ENCODE measurements at regions of chr5 and their contacts with region 1.

Region 1: DNA sequence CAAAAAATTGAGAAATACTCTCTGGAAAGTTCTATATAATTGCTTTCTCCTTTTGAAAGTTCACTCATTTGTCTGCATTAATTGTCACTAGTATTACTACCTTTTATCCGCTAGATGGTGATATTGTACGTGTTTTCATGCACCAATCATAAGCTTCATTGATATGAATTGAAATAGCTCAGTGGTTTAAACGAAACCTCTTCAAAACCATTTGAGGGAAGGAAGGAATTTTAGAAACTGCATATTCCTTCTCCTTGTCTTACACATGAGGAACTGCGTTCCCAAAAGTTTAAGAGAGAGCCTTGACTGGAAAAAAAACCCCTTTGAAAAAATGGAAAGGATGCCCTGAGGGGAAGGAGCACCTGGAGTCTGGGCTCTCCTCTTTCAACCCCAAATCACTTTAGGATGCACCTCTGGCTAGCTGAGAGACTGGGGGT is 98.6 kb downstream of the YTHDC2 start:
- DNase-seq: no peak
- ATAC-seq: peak in 4 of 8 donors; percentile 41 to 55 (median 48)
- H3K4me3 ChIP-seq: no peak overlapping the region
- H3K27ac ChIP-seq: no peak overlapping the region
- H3K4me1 ChIP-seq: peaks cover 0 to 8% (median 0%) of the 10 kb centered on the region in 9 donors
- H3K27me3 ChIP-seq: peaks cover 0 to 10% (median 0%) of the 10 kb centered on the region in 7 donors
- CTCF ChIP-seq: peak in 8 of 9 donors; percentile 30 to 76 (median 67)

Region 2: DNA sequence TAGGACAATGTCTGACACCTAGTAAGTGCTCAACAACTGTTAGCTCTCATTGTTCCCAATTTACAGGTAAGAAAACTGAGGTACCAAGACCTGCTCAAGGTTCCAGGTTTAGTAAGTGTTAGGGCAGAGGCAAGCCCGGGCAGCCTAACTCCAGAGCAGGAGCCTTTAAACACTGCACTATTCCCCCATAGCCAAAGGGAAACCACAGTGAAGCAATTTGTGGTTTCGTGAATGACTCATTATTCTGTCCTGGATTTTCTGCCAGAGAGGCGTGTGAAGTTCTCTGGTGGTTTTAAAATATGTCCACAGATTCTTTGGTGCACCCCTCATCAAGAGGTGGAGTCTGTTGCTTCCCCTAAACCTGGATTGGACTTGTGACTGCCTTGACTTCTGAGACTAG is 122.8 kb before region 1 on chr5:
- intact Hi-C with region 1: no loop called
- DNase-seq: no peak
- ATAC-seq: peak in 7 of 8 donors; percentile 49 to 76 (median 67)
- H3K4me3 ChIP-seq: peak overlapping the region in 1 of 10 donors; percentile 60
- H3K27ac ChIP-seq: peak overlapping the region in 2 of 10 donors; percentile 31 to 32
- H3K4me1 ChIP-seq: peaks cover 0 to 27% (median 13%) of the 10 kb centered on the region in 9 donors
- H3K27me3 ChIP-seq: peaks cover 0 to 98% (median 25%) of the 10 kb centered on the region in 7 donors
- CTCF ChIP-seq: no peak

Region 3: GRCh38 chr5:113520429-113520828 is 91.6 kb before region 1 on chr5:
- intact Hi-C with region 1: no loop called
- DNase-seq: no peak
- ATAC-seq: peak in 1 of 8 donors; percentile 30
- H3K4me3 ChIP-seq: no peak overlapping the region
- H3K27ac ChIP-seq: no peak overlapping the region
- H3K4me1 ChIP-seq: peaks cover 0 to 46% (median 20%) of the 10 kb centered on the region in 9 donors
- H3K27me3 ChIP-seq: no peaks in the 10 kb centered on the region
- CTCF ChIP-seq: no peak

Region 4: DNA sequence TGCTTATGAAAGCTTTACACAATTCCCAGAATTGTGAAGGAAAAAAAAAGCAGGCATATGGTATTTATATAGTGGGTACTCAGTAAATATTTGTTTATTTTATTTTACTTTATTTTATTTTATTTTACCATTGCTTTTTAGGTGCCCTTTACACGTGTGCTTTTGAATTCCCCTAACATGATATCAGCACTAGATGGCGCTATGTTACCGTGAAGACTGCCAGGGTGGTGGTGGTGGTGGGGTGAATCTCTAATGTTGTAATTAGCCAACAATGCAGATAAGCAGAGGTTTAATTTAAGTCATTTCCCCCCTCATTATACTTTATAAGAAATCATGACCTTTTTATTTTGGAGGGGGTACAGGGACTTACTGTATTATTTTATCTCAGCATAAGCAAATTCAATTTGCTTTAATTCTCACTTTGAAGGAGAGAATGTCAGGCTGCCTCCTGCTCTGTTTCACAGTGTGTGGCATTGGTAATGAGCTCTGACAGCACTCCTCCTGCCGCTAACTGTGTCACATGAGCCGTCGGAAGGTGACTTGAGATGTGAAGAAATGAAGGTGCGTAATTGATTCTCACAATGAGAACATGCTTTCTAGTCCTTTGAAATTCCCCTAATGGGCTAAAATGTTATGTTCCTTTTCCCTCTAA is 67.0 kb after region 1 on chr5:
- intact Hi-C with region 1: loop called in 1 of 10 experiments (anchors 5 kb)
- DNase-seq: no peak
- ATAC-seq: peak in 7 of 8 donors; percentile 53 to 84 (median 69)
- H3K4me3 ChIP-seq: no peak overlapping the region
- H3K27ac ChIP-seq: no peak overlapping the region
- H3K4me1 ChIP-seq: no peaks in the 10 kb centered on the region
- H3K27me3 ChIP-seq: no peaks in the 10 kb centered on the region
- CTCF ChIP-seq: peak; percentile 55 to 80 (median 71)

Region 5: DNA sequence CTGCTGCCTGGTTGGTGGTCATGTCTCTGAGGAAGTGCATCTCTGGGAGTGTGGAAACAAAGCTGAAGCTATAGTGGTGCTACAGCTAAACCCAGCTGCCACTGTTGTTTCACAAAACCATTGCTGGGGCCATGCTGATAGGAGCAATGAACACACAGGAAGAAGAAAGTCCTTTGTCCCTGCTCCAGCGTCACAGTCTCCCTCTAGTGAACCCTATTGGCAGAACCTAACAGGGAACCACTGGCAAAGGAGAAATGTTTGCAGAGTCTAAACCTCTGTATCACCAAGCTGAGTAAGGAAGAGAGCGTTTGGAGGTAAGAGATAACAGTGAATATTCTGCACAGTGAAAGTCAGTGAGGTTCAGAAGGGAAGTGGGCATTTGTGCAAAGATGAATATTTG is 145.4 kb after region 1 on chr5:
- intact Hi-C with region 1: no loop called
- DNase-seq: no peak
- ATAC-seq: no peak
- H3K4me3 ChIP-seq: no peak overlapping the region
- H3K27ac ChIP-seq: no peak overlapping the region
- H3K4me1 ChIP-seq: no peaks in the 10 kb centered on the region
- H3K27me3 ChIP-seq: peaks cover 0 to 10% (median 0%) of the 10 kb centered on the region in 7 donors
- CTCF ChIP-seq: no peak

Region 6: DNA sequence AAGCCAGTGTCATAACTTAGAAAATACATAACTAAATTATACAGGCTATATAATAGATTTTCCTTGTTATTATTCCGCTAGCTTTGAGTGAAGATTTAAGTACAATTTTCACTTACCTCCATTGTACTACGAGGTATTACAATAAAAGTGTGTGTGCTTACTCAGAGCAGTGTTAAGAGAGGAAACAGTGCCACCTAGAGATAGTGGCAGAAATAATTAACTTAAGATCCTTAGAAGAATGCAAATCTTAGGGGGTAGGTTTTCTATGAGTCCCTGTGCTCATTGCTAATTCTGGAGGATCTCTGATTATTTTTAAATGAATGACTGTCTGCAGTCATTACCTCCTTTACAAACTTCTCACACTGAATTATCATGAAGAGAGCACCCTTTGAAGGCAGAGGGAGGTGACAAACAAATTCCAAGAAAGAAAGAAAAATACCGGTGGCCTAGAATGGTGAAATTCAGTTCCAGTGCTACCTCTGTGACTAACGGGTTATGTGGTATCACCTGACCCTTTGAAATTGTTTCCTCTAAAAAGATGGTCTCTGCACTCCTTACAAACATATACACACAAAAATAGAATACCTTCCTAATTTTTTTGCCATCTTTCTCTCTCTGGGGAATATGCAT is 1177.8 kb after region 1 on chr5:
- intact Hi-C with region 1: loop called in 1 of 10 experiments (anchors 10 kb)
- DNase-seq: no peak
- ATAC-seq: no peak
- H3K4me3 ChIP-seq: no peak overlapping the region
- H3K27ac ChIP-seq: no peak overlapping the region
- H3K4me1 ChIP-seq: no peaks in the 10 kb centered on the region
- H3K27me3 ChIP-seq: peaks cover 0 to 19% (median 5%) of the 10 kb centered on the region in 7 donors
- CTCF ChIP-seq: peak in 7 of 9 donors; percentile 27 to 58 (median 47)

Region 7: GRCh38 chr5:115069087-115069968 is 1457.2 kb after region 1 on chr5:
- intact Hi-C with region 1: loop called in 4 of 10 experiments (anchors 5 kb)
- DNase-seq: peak in 1 of 2 donors; percentile 26
- ATAC-seq: peak in 2 of 8 donors; percentile 33 to 44
- H3K4me3 ChIP-seq: no peak overlapping the region
- H3K27ac ChIP-seq: no peak overlapping the region
- H3K4me1 ChIP-seq: no peaks in the 10 kb centered on the region
- H3K27me3 ChIP-seq: peaks cover 0 to 25% (median 15%) of the 10 kb centered on the region in 7 donors
- CTCF ChIP-seq: peak; percentile 14 to 69 (median 58)

Region 8: GRCh38 chr5:115246361-115246991 is 1634.4 kb after region 1 on chr5:
- intact Hi-C with region 1: loop called in 3 of 10 experiments (anchors 5 to 10 kb)
- DNase-seq: no peak
- ATAC-seq: peak in 1 of 8 donors; percentile 54
- H3K4me3 ChIP-seq: no peak overlapping the region
- H3K27ac ChIP-seq: no peak overlapping the region
- H3K4me1 ChIP-seq: peaks cover 0 to 24% (median 11%) of the 10 kb centered on the region in 9 donors
- H3K27me3 ChIP-seq: no peaks in the 10 kb centered on the region
- CTCF ChIP-seq: peak; percentile 59 to 80 (median 68)